Activated CD4-positive, alpha-beta T cell treated with anti-CD3 and anti-CD28 coated beads for 36 hours (primary cell): ENCODE measurements at regions of chr17 and their contacts with region 1.

Region 1: DNA sequence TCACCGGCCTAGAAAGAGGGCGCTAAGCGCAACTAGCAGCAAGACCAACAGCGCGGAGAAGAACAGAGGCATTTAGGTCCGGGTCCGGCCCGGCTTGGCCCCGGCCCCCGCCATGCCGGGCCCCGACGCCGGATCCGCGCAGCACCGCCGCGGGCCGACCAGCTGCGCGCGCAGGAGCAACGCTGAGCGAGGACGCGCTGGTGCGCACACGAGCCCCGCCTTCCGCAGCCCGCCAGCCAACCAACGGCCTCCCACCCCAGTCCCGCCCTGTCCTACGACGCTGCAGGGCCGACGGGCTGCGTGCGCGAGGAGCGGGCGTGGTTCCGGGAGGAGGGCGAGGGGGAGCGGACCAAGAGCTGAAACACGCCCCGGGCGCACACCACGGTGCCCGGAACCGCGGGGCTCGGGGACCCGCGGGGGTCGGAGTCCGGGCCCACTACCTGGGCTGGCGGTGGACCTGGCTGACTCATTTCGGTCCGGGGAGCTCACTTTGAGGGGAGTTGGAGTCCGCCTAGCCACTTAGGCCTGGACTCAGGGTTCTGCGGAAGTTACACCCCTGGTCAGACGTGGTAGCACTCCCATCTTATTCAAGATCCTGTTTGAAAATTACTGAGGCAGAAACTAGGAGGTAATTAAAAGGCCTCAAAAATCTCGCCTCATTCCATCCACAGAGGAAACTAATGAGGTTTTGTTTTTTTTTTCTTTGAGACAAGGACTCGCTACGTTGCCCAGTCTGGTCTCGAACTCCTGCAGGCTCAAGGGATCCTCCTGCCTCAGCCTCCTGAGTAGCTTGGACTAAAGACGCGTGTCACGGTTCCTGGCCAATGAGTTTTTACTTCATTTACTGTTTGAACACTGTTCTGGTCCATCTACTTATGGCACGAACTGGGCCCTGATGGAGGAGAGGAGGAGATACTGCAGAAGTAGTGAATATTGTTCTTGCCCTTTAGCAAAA is at the start of gene BLTP2:
- DNase-seq: peak; percentile 98
- ATAC-seq: peak; percentile 98
- H3K4me3 Mint-ChIP-seq: peak within 1 kb of the TSS; percentile 95
- H3K27ac Mint-ChIP-seq: peak within 1 kb of the TSS; percentile 87
- H3K4me1 Mint-ChIP-seq: peaks cover 38% of the 10 kb centered on the region
- H3K27me3 Mint-ChIP-seq: no peaks in the 10 kb centered on the region
- total RNA-seq, gene BLTP2: 138 to 152 TPM

Region 2: GRCh38 chr17:28008542-28008941 is 636.7 kb before region 1 on chr17:
- CTCF ChIA-PET with region 1: no interaction called
- POLR2A ChIA-PET with region 1: no interaction called
- intact Hi-C with region 1: no loop called
- DNase-seq: peak; percentile 24
- ATAC-seq: no peak
- H3K4me3 Mint-ChIP-seq: no peak overlapping the region
- H3K27ac Mint-ChIP-seq: no peak overlapping the region
- H3K4me1 Mint-ChIP-seq: no peaks in the 10 kb centered on the region
- H3K27me3 Mint-ChIP-seq: peaks cover 7% of the 10 kb centered on the region

Region 3: DNA sequence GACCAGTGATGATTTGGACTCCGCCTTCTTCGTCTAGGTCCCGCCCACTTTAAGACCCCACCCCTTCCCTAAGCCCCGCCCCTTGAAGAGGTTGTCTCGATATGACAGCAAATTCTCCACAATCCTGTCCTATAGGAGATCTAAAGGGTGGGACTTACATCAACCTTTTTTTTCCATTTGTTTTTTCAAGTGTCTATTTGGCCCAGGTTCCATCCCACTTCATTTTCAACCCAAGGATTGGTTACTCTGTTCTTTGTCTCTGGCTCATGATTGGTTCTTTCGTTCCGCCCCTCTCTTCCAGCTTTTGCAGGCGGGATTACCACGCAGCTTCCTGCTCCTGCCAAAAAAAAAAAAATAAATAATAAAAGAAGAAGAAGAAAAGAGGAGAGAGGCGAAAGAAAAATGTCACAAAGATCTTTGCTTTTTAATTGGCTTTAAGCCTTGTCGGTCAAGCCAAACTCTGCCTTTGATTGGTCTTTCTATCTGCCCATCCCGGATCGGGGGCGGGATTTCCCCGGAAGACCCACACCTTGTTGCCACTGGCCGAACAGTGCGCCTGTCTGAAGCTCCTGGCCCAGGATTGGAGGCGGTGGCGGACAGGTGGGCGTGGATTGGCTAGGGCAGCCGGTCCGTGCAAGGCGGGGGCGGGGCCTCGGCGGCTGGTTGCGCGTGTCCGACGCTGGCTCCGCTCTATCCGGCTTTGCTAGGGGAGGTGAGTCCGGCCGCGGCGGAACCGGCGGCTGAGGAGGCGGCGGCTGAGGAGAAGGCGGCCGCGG is 604.0 kb before region 1 on chr17:
- CTCF ChIA-PET with region 1: no interaction called
- POLR2A ChIA-PET with region 1: no interaction called
- intact Hi-C with region 1: loop called in 1 of 2 experiments (anchors 10 kb)
- DNase-seq: peak; percentile 100
- ATAC-seq: peak; percentile 96
- H3K4me3 Mint-ChIP-seq: peak overlapping the region; percentile 79
- H3K27ac Mint-ChIP-seq: peak overlapping the region; percentile 74
- H3K4me1 Mint-ChIP-seq: peaks cover 52% of the 10 kb centered on the region
- H3K27me3 Mint-ChIP-seq: no peaks in the 10 kb centered on the region

Region 4: GRCh38 chr17:28552246-28552999 is 92.8 kb before region 1 on chr17 and contains the start of gene UNC119:
- CTCF ChIA-PET with region 1: interaction called, 5 read pairs
- POLR2A ChIA-PET with region 1: no interaction called
- intact Hi-C with region 1: loop called in 1 of 2 experiments (anchors 1 kb)
- DNase-seq: peak; percentile 91
- ATAC-seq: peak; percentile 71
- H3K4me3 Mint-ChIP-seq: peak within 1 kb of the TSS; percentile 87
- H3K27ac Mint-ChIP-seq: peak within 1 kb of the TSS; percentile 70
- H3K4me1 Mint-ChIP-seq: peaks cover 52% of the 10 kb centered on the region
- H3K27me3 Mint-ChIP-seq: no peaks in the 10 kb centered on the region
- total RNA-seq, gene UNC119: 35.9 to 48.7 TPM

Region 5: GRCh38 chr17:28598799-28599310 is 46.4 kb before region 1 on chr17 and contains the start of gene SPAG5:
- CTCF ChIA-PET with region 1: interaction called, 8 read pairs
- POLR2A ChIA-PET with region 1: interaction called, 3 read pairs
- intact Hi-C with region 1: loop called (anchors 1 kb)
- DNase-seq: peak; percentile 97
- ATAC-seq: peak; percentile 92
- H3K4me3 Mint-ChIP-seq: peak within 1 kb of the TSS; percentile 89
- H3K27ac Mint-ChIP-seq: peak within 1 kb of the TSS; percentile 98
- H3K4me1 Mint-ChIP-seq: peaks cover 21% of the 10 kb centered on the region
- H3K27me3 Mint-ChIP-seq: no peaks in the 10 kb centered on the region
- total RNA-seq, gene SPAG5: 142 to 165 TPM

Region 6: DNA sequence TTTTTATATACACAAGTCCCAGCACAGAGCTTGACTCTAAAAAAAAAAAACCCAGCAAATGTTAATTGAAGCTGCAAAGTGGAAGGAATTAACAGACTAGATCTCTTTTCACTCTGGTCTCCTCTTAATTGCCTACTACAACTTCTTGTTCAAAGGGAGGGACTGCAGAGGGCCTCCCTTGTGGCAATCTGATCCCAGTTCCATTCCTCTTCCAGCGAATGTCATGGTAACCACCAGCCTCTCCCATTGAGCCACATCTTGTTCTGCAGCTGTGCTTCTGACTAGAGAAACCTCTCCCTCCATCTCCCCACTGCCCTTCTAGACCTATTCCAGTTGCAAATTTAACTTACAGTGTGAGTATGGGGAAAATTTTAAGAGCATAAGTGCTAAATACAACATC is 22.6 kb after region 1 on chr17:
- CTCF ChIA-PET with region 1: interaction called, 125 read pairs
- POLR2A ChIA-PET with region 1: interaction called, 23 read pairs
- intact Hi-C with region 1: no loop called
- DNase-seq: no peak
- ATAC-seq: no peak
- H3K4me3 Mint-ChIP-seq: no peak overlapping the region
- H3K27ac Mint-ChIP-seq: no peak overlapping the region
- H3K4me1 Mint-ChIP-seq: peaks cover 39% of the 10 kb centered on the region
- H3K27me3 Mint-ChIP-seq: no peaks in the 10 kb centered on the region

Region 7: GRCh38 chr17:28716740-28717577 is 71.7 kb after region 1 on chr17:
- CTCF ChIA-PET with region 1: interaction called, 13 read pairs
- POLR2A ChIA-PET with region 1: interaction called, 10 read pairs
- intact Hi-C with region 1: loop called in 1 of 2 experiments (anchors 1 kb)
- DNase-seq: peak; percentile 29
- ATAC-seq: no peak
- H3K4me3 Mint-ChIP-seq: peak overlapping the region; percentile 57
- H3K27ac Mint-ChIP-seq: no peak overlapping the region
- H3K4me1 Mint-ChIP-seq: peaks cover 30% of the 10 kb centered on the region
- H3K27me3 Mint-ChIP-seq: peaks cover 19% of the 10 kb centered on the region

Region 8: DNA sequence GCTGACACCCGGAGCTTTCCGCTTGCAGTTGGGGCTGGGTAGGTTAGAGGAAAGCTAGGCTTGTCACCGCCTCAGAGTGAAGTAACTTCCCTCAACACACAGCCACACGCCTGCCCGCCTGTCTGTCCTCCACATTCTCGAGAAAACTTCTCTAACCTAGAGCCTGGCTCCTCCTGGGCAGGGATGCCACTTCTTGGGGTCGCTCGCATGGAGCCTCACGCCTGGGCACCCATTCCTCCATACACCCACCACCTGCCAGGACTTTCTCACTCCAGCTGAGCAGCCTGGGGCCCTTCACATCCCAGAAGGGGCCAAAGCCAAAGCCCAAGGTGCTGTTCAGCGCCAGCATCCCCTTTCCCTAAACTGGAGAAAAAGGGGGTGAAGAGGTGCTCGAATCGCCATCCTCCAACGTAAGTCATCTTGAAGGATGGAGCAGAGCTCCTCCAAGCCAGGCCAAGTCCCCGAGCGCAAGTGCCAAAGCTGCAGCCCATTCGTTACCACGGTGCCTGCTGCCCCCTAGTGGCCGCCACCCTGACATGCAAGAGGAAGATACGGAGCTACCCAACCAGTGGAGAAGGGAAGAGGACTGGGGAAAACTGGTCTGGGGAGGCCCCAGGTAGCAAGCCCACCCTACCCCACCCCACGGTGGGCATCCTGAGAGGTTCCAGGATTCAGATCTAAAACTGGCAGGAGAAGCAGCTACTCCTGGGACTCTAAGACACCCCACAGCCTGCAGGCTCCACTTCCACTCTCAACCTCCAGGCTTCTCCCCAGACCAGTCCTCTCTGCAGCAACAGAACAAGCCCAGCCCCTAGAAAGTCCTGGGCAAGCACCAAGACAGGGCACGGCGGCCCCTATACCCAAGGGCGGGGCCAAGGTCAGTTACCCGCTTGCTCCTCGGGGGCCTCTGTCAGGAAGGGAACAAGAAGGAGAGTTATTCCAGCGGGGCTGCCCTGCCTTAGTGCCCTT is 471.8 kb after region 1 on chr17:
- CTCF ChIA-PET with region 1: interaction called, 4 read pairs
- POLR2A ChIA-PET with region 1: no interaction called
- intact Hi-C with region 1: loop called (anchors 1 to 10 kb)
- DNase-seq: peak; percentile 90
- ATAC-seq: peak; percentile 88
- H3K4me3 Mint-ChIP-seq: no peak overlapping the region
- H3K27ac Mint-ChIP-seq: no peak overlapping the region
- H3K4me1 Mint-ChIP-seq: peaks cover 5% of the 10 kb centered on the region
- H3K27me3 Mint-ChIP-seq: no peaks in the 10 kb centered on the region